GM23248 (cell line): ENCODE measurements at regions of chr1 and their contacts with region 1.

Region 1: DNA sequence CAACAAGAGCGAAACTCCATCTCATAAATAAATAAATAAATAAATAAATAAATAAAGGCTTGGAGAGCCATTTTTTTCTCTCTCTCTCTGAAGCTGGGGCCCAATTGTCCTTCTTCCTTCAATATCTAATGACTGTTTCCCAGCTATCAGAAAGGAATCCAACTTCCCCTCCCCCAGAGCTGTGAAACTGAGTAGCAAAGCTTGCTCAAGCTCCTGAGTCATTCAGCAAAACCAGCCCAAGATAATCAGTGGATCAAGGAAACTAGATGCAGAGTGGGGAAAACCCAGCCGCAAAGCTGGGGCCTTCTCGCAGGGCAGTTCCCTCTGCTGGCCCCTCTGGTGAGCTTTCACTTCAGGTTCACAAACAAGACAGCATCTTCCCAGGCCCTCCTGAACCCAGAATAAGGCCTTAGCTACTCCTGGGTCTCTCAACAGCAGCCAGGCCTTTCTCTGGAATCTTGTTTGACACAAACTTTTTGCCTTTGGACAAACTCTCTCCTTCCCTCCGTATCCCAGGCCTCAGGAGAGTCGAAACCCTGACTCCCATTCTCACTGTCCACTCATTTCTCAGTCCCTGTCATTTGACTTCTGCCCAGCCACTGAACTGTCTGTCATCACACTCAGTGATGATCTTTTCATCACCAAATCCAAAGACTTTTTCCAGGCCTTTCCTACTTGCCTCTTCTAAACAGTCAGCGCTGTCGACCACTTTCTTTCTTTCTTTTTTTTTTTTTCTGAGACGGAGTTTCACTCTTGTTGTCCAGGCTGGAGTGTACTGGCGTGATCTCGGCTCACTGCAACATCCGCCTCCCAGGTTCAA is 18.0 kb upstream of the PTP4A2 start:
- DNase-seq: peak; percentile 99
- H3K4me3 ChIP-seq: peak overlapping the region; percentile 62
- H3K27ac ChIP-seq: peak overlapping the region; percentile 100
- H3K4me1 ChIP-seq: peaks cover 37% of the 10 kb centered on the region
- H3K27me3 ChIP-seq: no peaks in the 10 kb centered on the region

Region 2: DNA sequence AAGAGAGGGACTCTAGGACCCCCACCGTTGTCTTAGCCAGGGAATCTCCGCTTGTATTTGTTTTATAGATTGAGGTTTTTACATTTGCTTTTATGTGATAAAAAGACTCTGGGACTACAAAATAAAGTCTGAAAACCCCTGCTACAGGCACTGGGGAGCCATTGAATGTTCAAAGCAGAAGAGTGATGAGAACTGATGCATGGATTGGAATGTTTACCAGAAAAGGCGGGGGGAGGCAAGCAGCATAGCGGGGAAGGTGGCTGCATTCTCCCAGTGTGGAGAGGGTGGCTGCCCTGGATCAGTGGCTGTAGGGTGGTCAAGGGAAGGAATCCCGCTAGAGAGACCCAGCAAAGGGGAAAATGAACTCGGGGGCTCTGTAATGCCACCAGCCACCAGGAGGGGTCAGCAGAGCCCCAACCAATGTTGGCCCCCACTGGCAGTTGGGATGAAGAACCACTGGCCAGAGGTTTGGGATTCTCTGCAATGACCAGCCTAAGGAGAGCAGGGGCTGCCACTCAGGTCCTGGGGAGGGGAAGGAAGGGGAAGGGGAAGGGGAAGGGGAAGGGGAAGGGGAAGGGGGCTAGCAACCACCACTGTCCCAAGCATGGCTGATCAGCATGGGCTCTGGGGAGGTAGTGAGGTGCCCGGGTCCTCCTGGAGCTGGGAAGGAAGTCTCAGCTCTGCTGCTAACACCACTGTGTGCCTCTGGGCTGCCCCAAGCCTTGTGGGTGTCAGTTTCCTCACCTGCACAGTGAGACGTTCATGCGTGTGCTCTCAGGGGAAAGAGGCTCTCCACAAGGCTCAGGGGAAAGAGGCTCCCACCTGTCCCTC is 292.3 kb before region 1 on chr1:
- in situ Hi-C with region 1: loop called (anchors 25 kb)
- DNase-seq: peak; percentile 65
- H3K4me3 ChIP-seq: no peak overlapping the region
- H3K27ac ChIP-seq: no peak overlapping the region
- H3K4me1 ChIP-seq: no peaks in the 10 kb centered on the region
- H3K27me3 ChIP-seq: no peaks in the 10 kb centered on the region

Region 3: GRCh38 chr1:31815752-31816500 is 140.2 kb before region 1 on chr1 and contains the start of gene SPOCD1:
- in situ Hi-C with region 1: loop called (anchors 10 kb)
- DNase-seq: peak; percentile 93
- H3K4me3 ChIP-seq: peak within 1 kb of the TSS; percentile 34; the same call in 1 of the 2 replicates
- H3K27ac ChIP-seq: no peak within 1 kb of the TSS
- H3K4me1 ChIP-seq: no peaks in the 10 kb centered on the region
- H3K27me3 ChIP-seq: no peaks in the 10 kb centered on the region
- total RNA-seq, gene SPOCD1: 36.8 and 43.0 TPM in 2 replicates